ENCODE measurements at regions of chr3 and their contacts with region 1.

Region 1: GRCh38 chr3:48240711-48241491 is at the start of gene ZNF589:
- DNase-seq: peak; percentile 96
- ATAC-seq: peak; percentile 99
- H3K4me3 Mint-ChIP-seq: peak within 1 kb of the TSS; percentile 91
- H3K27ac Mint-ChIP-seq: peak within 1 kb of the TSS; percentile 94
- H3K4me1 Mint-ChIP-seq: peaks cover 20% of the 10 kb centered on the region
- H3K27me3 Mint-ChIP-seq: no peaks in the 10 kb centered on the region
- total RNA-seq, gene ZNF589: 35.9 to 43.1 TPM

Region 2: DNA sequence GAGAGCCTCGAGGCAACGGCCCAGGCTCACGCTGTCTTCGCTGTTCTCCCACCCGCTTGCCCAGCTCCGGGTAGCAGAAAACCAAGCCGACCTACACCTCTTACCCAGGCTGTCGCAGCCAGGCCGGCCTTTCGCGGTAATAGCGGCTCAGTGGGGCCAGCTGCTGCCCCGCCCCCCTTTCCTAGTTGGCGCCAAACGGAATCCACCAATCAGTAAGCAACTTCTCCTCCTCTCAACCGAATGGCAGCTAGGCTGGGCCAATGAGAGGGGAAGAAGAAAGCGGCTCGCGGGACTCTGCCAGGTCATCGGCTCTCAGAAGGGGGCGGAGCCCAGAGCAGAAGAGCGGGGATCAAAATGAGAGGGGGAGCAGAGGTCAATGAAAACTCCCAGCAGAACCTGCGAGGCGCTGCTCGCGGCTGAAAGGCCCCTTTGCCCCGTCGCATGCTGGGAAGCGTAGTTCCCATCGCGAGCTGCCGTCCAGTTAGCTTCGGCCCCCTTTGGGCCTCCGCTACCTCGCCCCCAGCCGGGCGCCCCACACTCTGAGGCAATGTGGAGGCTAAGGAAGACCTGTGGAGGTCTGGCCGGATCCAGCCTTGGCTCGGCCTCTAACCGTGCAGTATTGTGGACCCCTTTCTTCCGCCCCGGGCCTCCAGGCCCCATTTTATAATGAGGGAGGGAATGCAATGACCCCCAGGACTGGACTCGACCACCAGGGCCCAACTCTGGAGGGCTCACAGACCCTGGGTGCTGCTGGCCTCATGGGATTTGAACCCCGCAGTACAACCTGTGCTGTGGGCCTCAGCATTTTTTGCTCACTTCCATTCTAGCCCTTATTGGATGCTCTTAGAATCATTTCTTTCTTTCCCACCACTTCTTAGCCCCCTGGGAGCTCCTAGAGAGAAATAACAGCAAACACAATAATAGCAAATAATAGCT is 52.4 kb before region 1 on chr3 and contains the start of gene CDC25A:
- POLR2A ChIA-PET with region 1: interaction called, 11 read pairs
- DNase-seq: peak; percentile 87
- ATAC-seq: peak; percentile 99
- H3K4me3 Mint-ChIP-seq: peak within 1 kb of the TSS; percentile 96
- H3K27ac Mint-ChIP-seq: peak within 1 kb of the TSS; percentile 84
- H3K4me1 Mint-ChIP-seq: peaks cover 20% of the 10 kb centered on the region
- H3K27me3 Mint-ChIP-seq: peaks cover 4% of the 10 kb centered on the region
- total RNA-seq, gene CDC25A: 14.7 to 19.0 TPM

Region 3: GRCh38 chr3:48268381-48269183 is 27.7 kb after region 1 on chr3:
- POLR2A ChIA-PET with region 1: interaction called, 17 read pairs
- DNase-seq: peak; percentile 66
- ATAC-seq: peak; percentile 99
- H3K4me3 Mint-ChIP-seq: peak overlapping the region; percentile 66
- H3K27ac Mint-ChIP-seq: peak overlapping the region; percentile 88
- H3K4me1 Mint-ChIP-seq: peaks cover 30% of the 10 kb centered on the region
- H3K27me3 Mint-ChIP-seq: no peaks in the 10 kb centered on the region

Region 4: DNA sequence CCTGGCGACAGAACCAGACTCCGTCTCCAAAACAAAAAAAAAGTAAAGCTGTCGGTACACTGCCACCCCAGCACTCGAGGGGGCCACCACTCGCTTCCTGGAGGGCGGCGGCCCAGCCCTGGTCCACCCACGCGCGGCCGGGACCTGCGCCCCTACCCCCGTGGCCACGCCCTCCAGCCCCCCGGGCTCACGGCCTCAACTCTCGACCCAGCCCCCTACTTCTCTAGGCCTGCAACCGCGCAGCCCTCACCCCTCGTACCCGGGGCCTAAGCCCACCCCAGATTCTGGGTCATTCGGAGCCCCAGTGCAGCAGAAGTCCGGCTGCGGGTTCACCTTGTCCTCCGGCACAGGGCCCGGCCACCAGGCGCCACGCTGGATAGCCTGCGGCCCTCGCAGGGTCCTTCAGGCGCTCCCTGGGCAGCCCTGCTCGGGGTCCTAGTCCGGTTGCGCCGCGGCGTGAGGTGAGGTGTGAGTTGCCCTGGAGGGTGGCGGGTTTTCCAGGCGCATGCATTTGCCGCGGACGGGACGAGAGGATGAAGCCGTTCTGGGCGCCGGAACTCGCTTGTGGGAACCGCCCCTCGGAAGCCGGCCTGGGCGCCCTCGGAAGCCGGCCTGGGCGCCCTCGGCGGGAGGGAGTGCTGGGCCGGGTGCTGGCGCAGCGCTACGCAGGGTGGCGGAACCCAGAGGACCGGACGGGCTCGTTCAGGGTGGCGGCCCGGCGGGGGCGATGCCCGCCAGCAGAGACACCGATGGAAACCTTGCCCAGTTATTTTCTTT is 60.3 kb after region 1 on chr3:
- POLR2A ChIA-PET with region 1: interaction called, 15 read pairs
- DNase-seq: peak; percentile 96
- ATAC-seq: peak; percentile 82
- H3K4me3 Mint-ChIP-seq: peak within 1 kb of the TSS; percentile 91
- H3K27ac Mint-ChIP-seq: peak within 1 kb of the TSS; percentile 97
- H3K4me1 Mint-ChIP-seq: peaks cover 29% of the 10 kb centered on the region
- H3K27me3 Mint-ChIP-seq: peaks cover 11% of the 10 kb centered on the region

Region 5: GRCh38 chr3:48334605-48335004 is 93.7 kb after region 1 on chr3:
- POLR2A ChIA-PET with region 1: no interaction called
- DNase-seq: no peak
- ATAC-seq: no peak
- H3K4me3 Mint-ChIP-seq: no peak overlapping the region
- H3K27ac Mint-ChIP-seq: no peak overlapping the region
- H3K4me1 Mint-ChIP-seq: no peaks in the 10 kb centered on the region
- H3K27me3 Mint-ChIP-seq: peaks cover 34% of the 10 kb centered on the region

Region 6: GRCh38 chr3:48439820-48440589 is 199.1 kb after region 1 on chr3 and contains the starts of genes CCDC51 and TMA7:
- POLR2A ChIA-PET with region 1: interaction called, 11 read pairs
- DNase-seq: peak; percentile 95
- ATAC-seq: peak; percentile 92
- H3K4me3 Mint-ChIP-seq: peak within 1 kb of the TSS; percentile 99
- H3K27ac Mint-ChIP-seq: peak within 1 kb of the TSS; percentile 97
- H3K4me1 Mint-ChIP-seq: peaks cover 33% of the 10 kb centered on the region
- H3K27me3 Mint-ChIP-seq: no peaks in the 10 kb centered on the region
- total RNA-seq, gene CCDC51: 11.5 to 12.2 TPM
- total RNA-seq, gene TMA7: 260 to 263 TPM